ENCODE measurements at regions of chr9 and their contacts with region 1.

Region 1: DNA sequence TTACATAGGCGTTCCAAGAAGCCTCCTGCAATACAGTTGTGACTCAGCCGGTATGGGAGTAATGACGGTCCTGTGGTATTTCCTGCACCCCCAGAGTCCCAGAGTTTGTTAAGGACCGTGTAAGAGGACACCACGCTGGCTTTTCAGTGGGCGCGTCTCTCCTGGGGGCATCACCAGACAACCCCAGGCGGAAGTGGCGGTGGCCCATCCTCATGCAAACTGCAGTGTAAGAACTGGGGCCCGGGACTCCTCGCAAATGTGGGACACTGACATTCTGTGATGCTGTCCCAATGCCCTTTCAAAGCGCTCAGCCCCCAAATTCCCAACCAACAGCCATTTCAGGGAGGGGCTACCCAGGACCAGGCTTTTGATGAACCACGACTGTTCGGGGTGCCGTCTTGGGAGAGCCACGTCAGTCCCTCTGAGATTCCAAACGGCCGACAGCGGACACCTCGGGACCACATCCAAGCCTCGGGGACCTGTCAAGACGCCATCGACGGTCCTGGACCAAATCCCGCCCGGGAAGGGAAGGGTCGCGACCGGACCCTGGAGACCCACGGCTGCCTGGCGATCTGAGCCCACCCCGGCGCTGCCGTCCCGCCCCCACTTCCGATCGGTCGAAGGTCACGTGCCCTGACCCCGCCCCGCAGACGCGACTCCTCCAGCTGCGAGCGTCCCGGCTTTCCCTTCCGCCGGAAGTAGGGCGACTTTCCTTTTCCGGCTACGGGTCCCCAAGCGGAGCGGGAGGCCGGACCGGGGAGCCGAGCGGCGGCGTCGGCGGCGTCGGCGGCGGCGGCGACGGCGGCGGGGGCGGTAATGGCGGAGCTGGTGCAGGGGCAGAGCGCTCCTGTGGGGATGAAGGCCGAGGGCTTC is at the start of gene FUBP3:
- DNase-seq: peak; percentile 96
- ATAC-seq: peak; percentile 98
- total RNA-seq, gene FUBP3: 22.4 to 34.8 TPM

Region 2: GRCh38 chr9:130535818-130536561 is 43.1 kb before region 1 on chr9:
- intact Hi-C with region 1: loop called in 1 of 2 experiments (anchors 5 kb)
- DNase-seq: peak; percentile 37
- ATAC-seq: peak; percentile 83 to 84

Region 3: GRCh38 chr9:130549093-130549735 is 29.9 kb before region 1 on chr9:
- intact Hi-C with region 1: no loop called
- DNase-seq: no peak
- ATAC-seq: no peak

Region 4: DNA sequence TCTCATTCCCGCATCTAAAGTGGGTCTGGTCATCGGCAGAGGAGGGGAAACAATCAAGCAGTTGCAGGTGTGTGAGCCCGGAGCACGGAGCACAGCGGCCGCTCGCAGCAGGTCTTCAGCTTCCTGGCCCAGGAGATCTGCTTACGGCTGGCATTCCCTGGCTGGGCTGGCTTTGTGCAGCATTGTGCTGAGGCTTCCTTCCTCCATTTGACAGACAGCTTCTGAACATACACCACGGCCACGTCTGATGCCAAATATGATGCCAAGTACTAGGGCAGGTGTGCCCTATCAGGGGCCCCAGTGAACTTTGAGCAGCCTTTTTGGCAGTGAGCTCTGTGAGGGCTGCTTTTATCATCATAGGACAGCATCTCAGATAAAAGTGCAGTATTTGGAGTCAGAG is 37.4 kb after region 1 on chr9:
- intact Hi-C with region 1: no loop called
- DNase-seq: no peak
- ATAC-seq: no peak

Measured in left cardiac atrium (tissue), 4 donors.